MCF 10A (cell line): ENCODE measurements at regions of chr11 and their contacts with region 1.

Region 1: DNA sequence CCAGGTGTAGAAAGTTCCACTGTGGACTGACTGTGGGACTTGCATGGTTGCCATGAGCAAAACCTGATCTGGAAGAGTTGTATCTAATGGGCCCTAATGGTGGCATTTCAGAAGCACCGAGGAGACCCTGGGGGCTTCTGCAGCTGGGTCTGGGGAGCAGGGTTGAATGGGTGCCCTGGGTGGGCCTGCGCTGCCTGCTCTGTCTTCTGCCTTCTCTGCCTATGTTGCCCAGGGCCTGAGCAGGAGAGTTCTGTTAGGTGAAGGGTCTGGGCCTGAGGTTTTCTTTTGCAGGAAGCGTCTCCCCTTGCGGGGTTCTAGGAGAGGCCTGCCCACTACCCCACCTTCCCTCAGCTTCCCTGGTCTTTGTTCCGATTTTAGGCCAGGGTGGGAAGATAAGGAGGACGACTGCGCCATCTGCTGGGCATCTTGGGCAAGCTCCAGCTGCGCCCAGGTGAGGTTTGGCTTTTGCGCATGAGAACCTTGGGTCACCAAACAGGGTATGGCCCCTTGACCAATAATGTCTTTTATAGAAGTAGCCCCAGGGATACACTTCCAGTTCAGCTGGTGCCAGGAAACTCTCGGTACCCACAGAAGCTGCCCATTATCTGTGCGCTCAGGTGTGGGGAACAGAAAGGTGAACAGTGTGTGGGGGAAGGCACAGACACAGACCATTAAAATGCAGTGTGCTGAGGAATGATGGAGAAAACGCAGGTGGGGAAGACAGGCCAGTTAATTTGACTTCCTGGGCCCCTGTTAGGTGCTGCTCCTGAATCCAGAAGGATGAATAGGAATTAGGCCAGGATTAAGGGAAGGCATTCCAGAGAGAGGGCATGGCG is 23.2 kb downstream of the COMMD9 start:
- DNase-seq: peak; percentile 68
- H3K4me3 Mint-ChIP-seq: no peak overlapping the region
- H3K27ac Mint-ChIP-seq: no peak overlapping the region
- H3K4me1 Mint-ChIP-seq: no peaks in the 10 kb centered on the region
- H3K27me3 Mint-ChIP-seq: no peaks in the 10 kb centered on the region
- CTCF ChIP-seq: peak; percentile 92

Region 2: DNA sequence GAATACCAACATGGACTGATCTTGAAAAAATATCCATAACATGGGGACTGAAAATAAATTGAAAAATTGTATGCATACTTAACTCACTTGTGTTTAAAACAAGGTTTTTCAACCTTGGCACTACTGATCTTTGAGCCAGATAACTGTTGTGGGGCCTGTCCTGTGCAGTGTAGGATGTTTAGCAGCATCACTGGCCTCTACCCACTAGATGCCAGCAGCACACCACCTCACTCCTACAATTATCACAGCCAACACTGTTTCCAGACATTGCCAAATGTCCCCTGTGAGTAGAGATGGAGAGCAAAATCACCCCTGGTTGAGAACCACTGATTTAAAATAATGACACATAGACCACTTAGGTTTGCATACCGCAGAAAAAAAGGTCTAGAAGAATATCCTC is 801.7 kb before region 1 on chr11:
- CTCF ChIA-PET with region 1: no interaction called
- POLR2A ChIA-PET with region 1: no interaction called
- intact Hi-C with region 1: loop called (anchors 1 kb)
- DNase-seq: peak; percentile 19
- H3K4me3 Mint-ChIP-seq: no peak overlapping the region
- H3K27ac Mint-ChIP-seq: no peak overlapping the region
- H3K4me1 Mint-ChIP-seq: no peaks in the 10 kb centered on the region
- H3K27me3 Mint-ChIP-seq: peaks cover 29% of the 10 kb centered on the region
- CTCF ChIP-seq: no peak

Region 3: DNA sequence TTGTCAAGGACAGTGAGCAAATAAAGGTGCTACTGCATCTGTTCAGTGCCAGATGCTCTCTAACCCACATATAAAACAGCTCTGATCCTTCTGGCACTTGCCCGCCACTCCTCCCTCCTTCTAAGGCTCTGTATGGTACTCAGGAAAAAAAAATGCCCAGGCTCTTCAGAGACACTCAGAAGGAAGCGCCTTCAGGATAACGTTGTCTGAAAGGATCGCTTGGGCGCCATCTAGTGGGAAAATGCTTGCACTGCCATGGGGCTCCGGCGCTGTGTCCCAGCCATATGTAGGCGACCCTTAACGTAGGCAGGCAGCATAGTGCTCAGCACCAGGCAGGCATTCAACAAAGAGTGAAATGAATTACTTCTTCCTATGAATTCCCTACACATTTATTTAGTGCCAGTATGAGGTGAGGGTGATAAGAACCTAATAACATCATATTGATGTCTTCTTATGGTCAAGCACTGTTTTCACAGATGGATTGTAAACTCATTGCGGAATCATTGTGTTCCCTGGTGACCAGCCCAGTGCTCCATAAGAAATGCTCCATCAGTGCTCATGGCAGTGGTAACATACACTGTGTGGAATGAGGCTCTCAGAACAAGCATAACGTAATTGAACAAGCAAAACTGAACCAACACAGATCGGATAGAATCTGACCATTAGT is 780.2 kb before region 1 on chr11:
- CTCF ChIA-PET with region 1: interaction called, 23 read pairs
- POLR2A ChIA-PET with region 1: no interaction called
- intact Hi-C with region 1: loop called (anchors 5 kb)
- DNase-seq: peak; percentile 80
- H3K4me3 Mint-ChIP-seq: no peak overlapping the region
- H3K27ac Mint-ChIP-seq: no peak overlapping the region
- H3K4me1 Mint-ChIP-seq: peaks cover 17% of the 10 kb centered on the region
- H3K27me3 Mint-ChIP-seq: peaks cover 10% of the 10 kb centered on the region
- CTCF ChIP-seq: peak; percentile 92

Region 4: GRCh38 chr11:36041988-36042611 is 223.9 kb before region 1 on chr11:
- CTCF ChIA-PET with region 1: interaction called, 8 read pairs
- POLR2A ChIA-PET with region 1: no interaction called
- intact Hi-C with region 1: loop called (anchors 2 kb)
- DNase-seq: peak; percentile 27
- H3K4me3 Mint-ChIP-seq: no peak overlapping the region
- H3K27ac Mint-ChIP-seq: peak overlapping the region; percentile 59
- H3K4me1 Mint-ChIP-seq: peaks cover 12% of the 10 kb centered on the region
- H3K27me3 Mint-ChIP-seq: no peaks in the 10 kb centered on the region
- CTCF ChIP-seq: peak; percentile 51

Region 5: GRCh38 chr11:36149538-36150242 is 116.3 kb before region 1 on chr11:
- CTCF ChIA-PET with region 1: interaction called, 5 read pairs
- POLR2A ChIA-PET with region 1: interaction called, 4 read pairs
- intact Hi-C with region 1: loop called (anchors 1 kb)
- DNase-seq: peak; percentile 100
- H3K4me3 Mint-ChIP-seq: peak overlapping the region; percentile 29
- H3K27ac Mint-ChIP-seq: peak overlapping the region; percentile 82
- H3K4me1 Mint-ChIP-seq: peaks cover 42% of the 10 kb centered on the region
- H3K27me3 Mint-ChIP-seq: no peaks in the 10 kb centered on the region
- CTCF ChIP-seq: peak; percentile 80

Region 6: DNA sequence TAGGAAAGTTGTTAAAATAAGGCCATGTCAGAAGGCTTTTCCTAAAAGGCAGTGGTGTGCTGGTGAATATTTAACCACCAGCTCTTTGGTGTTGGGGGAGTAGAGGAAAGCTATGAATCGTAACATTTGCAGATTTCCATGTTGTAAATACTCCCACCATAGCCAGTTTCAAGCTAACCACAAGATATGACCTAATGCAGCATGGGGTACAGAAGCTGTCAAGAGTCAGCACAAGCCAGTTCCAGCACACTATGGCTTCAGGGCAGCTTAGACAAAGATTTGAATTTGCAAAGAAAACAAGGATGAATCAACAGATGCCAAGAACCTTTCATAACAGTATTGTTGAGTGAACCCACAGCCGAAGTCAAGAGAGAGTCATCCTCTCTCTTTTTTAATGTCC is 16.8 kb before region 1 on chr11:
- CTCF ChIA-PET with region 1: interaction called, 30 read pairs
- POLR2A ChIA-PET with region 1: no interaction called
- intact Hi-C with region 1: no loop called
- DNase-seq: peak; percentile 89
- H3K4me3 Mint-ChIP-seq: no peak overlapping the region
- H3K27ac Mint-ChIP-seq: peak overlapping the region; percentile 77
- H3K4me1 Mint-ChIP-seq: peaks cover 21% of the 10 kb centered on the region
- H3K27me3 Mint-ChIP-seq: no peaks in the 10 kb centered on the region
- CTCF ChIP-seq: no peak

Region 7: GRCh38 chr11:36278531-36279282 is 12.7 kb after region 1 on chr11:
- CTCF ChIA-PET with region 1: interaction called, 20 read pairs
- POLR2A ChIA-PET with region 1: interaction called, 5 read pairs
- intact Hi-C with region 1: no loop called
- DNase-seq: no peak
- H3K4me3 Mint-ChIP-seq: no peak overlapping the region
- H3K27ac Mint-ChIP-seq: no peak overlapping the region
- H3K4me1 Mint-ChIP-seq: peaks cover 9% of the 10 kb centered on the region
- H3K27me3 Mint-ChIP-seq: no peaks in the 10 kb centered on the region
- CTCF ChIP-seq: no peak

Region 8: DNA sequence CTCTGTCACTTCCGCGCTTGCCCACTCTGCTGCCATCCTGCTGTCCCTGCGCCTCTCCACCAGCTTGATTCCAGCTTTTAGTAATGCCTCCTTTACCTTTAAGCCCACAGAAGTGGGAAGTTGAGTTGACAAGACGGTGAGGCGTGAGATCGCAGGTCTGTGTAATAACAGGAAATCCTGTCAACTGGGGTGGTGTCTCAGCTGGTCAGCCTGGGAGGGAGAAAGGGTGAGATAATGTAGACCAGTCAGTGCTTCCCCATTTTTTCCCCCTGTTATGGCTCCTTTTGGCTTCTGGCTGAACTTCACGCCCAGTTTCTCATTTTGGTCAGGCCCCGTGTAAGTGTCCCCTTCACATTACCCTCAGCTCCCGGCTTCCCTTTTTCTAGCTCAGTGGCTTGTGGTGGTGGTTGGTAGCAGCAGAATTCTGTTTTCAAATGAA is 145.2 kb after region 1 on chr11:
- CTCF ChIA-PET with region 1: no interaction called
- POLR2A ChIA-PET with region 1: no interaction called
- intact Hi-C with region 1: no loop called
- DNase-seq: no peak
- H3K4me3 Mint-ChIP-seq: no peak overlapping the region
- H3K27ac Mint-ChIP-seq: peak overlapping the region; percentile 46
- H3K4me1 Mint-ChIP-seq: no peaks in the 10 kb centered on the region
- H3K27me3 Mint-ChIP-seq: no peaks in the 10 kb centered on the region
- CTCF ChIP-seq: no peak